ENCODE measurements at regions of chr12 and their contacts with region 1.

Region 1: GRCh38 chr12:122951979-122952892 is 14.0 kb downstream of the ABCB9 start:
- DNase-seq: peak; percentile 61
- H3K4me3 ChIP-seq: no peak overlapping the region
- H3K27ac ChIP-seq: no peak overlapping the region
- H3K4me1 ChIP-seq: peaks cover 29% of the 10 kb centered on the region
- H3K27me3 ChIP-seq: no peaks in the 10 kb centered on the region
- CTCF ChIP-seq: peak; percentile 92 to 96

Region 2: GRCh38 chr12:122752464-122753318 is 199.5 kb before region 1 on chr12 and contains the start of gene DENR:
- CTCF ChIA-PET with region 1: no interaction called
- dilution Hi-C with region 1: no loop called
- in situ Hi-C with region 1: no loop called
- intact Hi-C with region 1: loop called (anchors 1 kb)
- DNase-seq: peak; percentile 99
- H3K4me3 ChIP-seq: peak within 1 kb of the TSS; percentile 70 to 80 (median 78)
- H3K27ac ChIP-seq: peak within 1 kb of the TSS; percentile 66
- H3K4me1 ChIP-seq: peaks cover 14% of the 10 kb centered on the region
- H3K27me3 ChIP-seq: no peaks in the 10 kb centered on the region
- CTCF ChIP-seq: peak; percentile 88 to 92
- total RNA-seq, gene DENR: 42.5 to 73.0 TPM

Region 3: GRCh38 chr12:122767691-122768090 is 184.5 kb before region 1 on chr12:
- CTCF ChIA-PET with region 1: no interaction called
- dilution Hi-C with region 1: no loop called
- in situ Hi-C with region 1: no loop called
- intact Hi-C with region 1: loop called (anchors 5 kb)
- DNase-seq: no peak
- H3K4me3 ChIP-seq: no peak overlapping the region
- H3K27ac ChIP-seq: no peak overlapping the region
- H3K4me1 ChIP-seq: no peaks in the 10 kb centered on the region
- H3K27me3 ChIP-seq: no peaks in the 10 kb centered on the region
- CTCF ChIP-seq: no peak

Region 4: DNA sequence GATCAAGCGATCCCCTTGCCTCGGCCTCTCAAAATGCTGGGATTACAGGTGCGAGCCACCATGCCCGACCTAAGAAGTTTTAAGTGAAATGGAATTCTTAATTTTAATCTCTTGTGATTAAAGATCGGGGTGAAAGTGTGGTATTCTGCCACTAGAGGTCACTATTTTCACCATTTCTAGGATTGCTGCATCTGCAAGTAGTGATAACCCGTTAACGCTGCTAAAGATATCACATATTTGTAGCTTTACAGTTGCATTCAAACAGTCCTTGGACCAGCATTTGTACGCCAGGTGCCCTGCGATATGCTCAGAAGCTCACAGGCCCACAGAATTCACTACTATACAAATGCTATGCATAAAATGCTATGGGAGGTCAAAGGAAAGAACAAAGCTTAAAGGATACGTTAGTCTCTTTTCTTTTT is 158.5 kb before region 1 on chr12:
- CTCF ChIA-PET with region 1: no interaction called
- dilution Hi-C with region 1: no loop called
- in situ Hi-C with region 1: loop called (anchors 10 to 25 kb)
- intact Hi-C with region 1: loop called (anchors 1 kb)
- DNase-seq: peak; percentile 39
- H3K4me3 ChIP-seq: no peak overlapping the region
- H3K27ac ChIP-seq: no peak overlapping the region
- H3K4me1 ChIP-seq: peaks cover 20% of the 10 kb centered on the region
- H3K27me3 ChIP-seq: no peaks in the 10 kb centered on the region
- CTCF ChIP-seq: peak; percentile 57 to 63

Region 5: GRCh38 chr12:122860346-122861090 is 91.7 kb before region 1 on chr12:
- CTCF ChIA-PET with region 1: no interaction called
- dilution Hi-C with region 1: no loop called
- in situ Hi-C with region 1: no loop called
- intact Hi-C with region 1: loop called (anchors 1 kb)
- DNase-seq: peak; percentile 64
- H3K4me3 ChIP-seq: no peak overlapping the region
- H3K27ac ChIP-seq: no peak overlapping the region
- H3K4me1 ChIP-seq: peaks cover 26% of the 10 kb centered on the region
- H3K27me3 ChIP-seq: no peaks in the 10 kb centered on the region
- CTCF ChIP-seq: peak; percentile 66 to 94

Region 6: DNA sequence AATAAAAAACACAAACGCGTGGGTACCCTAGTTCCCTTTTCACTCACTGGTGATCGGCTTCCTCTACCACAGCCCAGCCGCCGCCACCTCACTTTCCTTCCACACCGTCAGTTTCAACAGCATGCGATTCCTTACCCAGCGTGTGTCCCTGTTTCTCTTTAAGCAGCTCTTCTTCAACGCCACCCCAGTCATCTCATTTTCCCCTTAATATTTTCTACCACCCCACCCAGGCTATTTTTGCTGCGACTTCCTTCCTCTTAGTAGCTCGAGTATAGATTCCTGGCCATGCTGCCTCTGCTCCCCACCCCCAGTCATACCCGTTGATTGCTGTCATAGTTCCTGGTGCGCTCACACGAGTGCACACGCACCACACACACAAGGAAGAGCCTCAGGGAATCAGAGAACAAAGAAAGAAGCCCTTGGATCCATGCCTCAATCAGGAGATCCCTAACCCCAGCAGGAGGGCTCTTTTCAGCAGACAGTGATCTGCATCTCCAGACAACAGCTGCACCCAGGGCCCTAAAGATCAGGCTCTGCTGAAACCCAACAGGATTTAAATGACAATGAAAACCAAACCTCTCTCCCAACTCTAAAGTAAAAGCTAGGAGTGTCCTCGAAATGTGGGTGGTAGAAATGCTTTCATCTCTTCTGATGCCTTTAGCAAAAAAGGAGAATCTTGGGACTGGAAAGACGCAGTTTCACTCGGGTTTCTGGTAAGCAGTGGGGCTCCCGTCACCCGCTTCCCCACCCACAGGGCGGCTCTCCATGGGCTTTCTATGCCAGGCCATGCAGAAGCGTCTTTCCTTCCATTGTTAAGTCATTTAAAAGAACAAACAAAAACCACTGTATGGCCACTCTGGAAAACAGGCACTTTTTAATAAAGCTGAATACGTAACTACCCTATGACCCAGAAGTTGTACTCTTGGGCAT is 80.1 kb before region 1 on chr12:
- CTCF ChIA-PET with region 1: no interaction called
- dilution Hi-C with region 1: no loop called
- in situ Hi-C with region 1: loop called in 1 of 2 experiments (anchors 5 kb)
- intact Hi-C with region 1: no loop called
- DNase-seq: peak; percentile 70
- H3K4me3 ChIP-seq: no peak overlapping the region
- H3K27ac ChIP-seq: peak overlapping the region; percentile 43
- H3K4me1 ChIP-seq: peaks cover 49% of the 10 kb centered on the region
- H3K27me3 ChIP-seq: no peaks in the 10 kb centered on the region
- CTCF ChIP-seq: no peak

Region 7: GRCh38 chr12:122921917-122922316 is 30.3 kb before region 1 on chr12:
- CTCF ChIA-PET with region 1: no interaction called
- dilution Hi-C with region 1: no loop called
- in situ Hi-C with region 1: no loop called
- intact Hi-C with region 1: no loop called
- DNase-seq: no peak
- H3K4me3 ChIP-seq: no peak overlapping the region
- H3K27ac ChIP-seq: no peak overlapping the region
- H3K4me1 ChIP-seq: peaks cover 19% of the 10 kb centered on the region
- H3K27me3 ChIP-seq: no peaks in the 10 kb centered on the region
- CTCF ChIP-seq: no peak

Region 8: DNA sequence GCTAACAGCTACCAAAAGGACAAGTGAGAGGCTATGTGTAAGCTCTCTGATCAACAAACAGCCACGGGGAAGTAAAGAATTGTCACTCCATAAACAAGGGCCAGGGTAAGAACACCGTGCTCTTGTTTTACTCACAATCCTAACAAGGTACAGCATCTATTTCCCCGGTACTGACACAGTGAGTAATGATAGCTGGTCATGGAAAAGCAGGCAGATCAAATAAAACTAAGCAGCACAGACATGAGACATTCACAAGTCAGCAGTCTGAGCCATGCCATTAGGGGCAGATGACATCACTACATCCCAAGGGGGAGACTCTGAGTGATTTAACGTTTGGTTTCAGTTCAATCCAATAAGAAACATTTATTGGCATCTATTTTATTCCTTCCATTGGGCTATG is 82.6 kb after region 1 on chr12:
- CTCF ChIA-PET with region 1: no interaction called
- dilution Hi-C with region 1: no loop called
- in situ Hi-C with region 1: no loop called
- intact Hi-C with region 1: no loop called
- DNase-seq: peak; percentile 70
- H3K4me3 ChIP-seq: no peak overlapping the region
- H3K27ac ChIP-seq: no peak overlapping the region
- H3K4me1 ChIP-seq: no peaks in the 10 kb centered on the region
- H3K27me3 ChIP-seq: no peaks in the 10 kb centered on the region
- CTCF ChIP-seq: no peak

Region 9: DNA sequence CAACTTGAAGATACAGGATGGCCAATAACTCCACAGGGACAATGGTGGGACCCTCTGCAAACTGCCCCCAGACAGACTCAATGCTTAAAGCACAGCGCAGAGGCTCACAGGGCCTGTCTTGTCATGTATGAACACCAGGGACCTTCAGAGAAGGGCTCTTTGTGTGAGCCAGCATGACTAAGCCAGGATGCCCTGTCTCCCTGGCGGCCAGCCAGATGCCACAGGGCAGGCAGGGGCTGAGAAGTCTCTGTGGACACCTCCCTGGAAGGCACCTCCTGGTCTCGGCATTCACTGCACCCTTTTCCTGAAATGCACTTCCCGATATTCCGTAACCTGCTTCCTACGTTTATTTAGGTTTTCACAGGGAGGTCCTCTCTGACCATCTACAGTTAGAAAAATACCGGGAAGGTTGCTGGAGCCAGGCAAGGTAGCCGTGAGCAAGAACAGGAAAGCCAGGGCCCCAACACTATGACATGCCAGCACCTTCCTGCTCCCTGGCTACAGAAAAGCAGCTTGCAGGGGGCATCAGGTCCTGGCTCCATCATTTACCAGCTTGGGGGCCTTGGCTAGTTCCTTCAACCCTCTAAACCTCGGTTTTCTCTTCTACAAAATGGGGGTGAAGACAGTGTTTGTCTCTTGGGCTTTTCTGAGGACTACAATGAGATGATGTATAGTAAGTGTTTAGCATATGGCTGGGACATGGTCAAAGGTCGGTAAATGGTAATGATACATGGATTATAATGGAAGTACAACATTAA is 133.7 kb after region 1 on chr12:
- CTCF ChIA-PET with region 1: no interaction called
- dilution Hi-C with region 1: no loop called
- in situ Hi-C with region 1: no loop called
- intact Hi-C with region 1: no loop called
- DNase-seq: peak; percentile 94
- H3K4me3 ChIP-seq: no peak overlapping the region
- H3K27ac ChIP-seq: peak overlapping the region; percentile 37
- H3K4me1 ChIP-seq: peaks cover 66% of the 10 kb centered on the region
- H3K27me3 ChIP-seq: no peaks in the 10 kb centered on the region
- CTCF ChIP-seq: peak in 1 of 2 donors; percentile 38

Region 10: GRCh38 chr12:123131879-123132452 is 179.7 kb after region 1 on chr12:
- CTCF ChIA-PET with region 1: no interaction called
- dilution Hi-C with region 1: no loop called
- in situ Hi-C with region 1: no loop called
- intact Hi-C with region 1: no loop called
- DNase-seq: peak; percentile 46
- H3K4me3 ChIP-seq: no peak overlapping the region
- H3K27ac ChIP-seq: peak overlapping the region; percentile 88
- H3K4me1 ChIP-seq: peaks cover 69% of the 10 kb centered on the region
- H3K27me3 ChIP-seq: no peaks in the 10 kb centered on the region
- CTCF ChIP-seq: no peak

Measured in mammary epithelial cell (primary cell).